H1 (cell line): ENCODE measurements at regions of chr2 and their contacts with region 1.

Region 1: DNA sequence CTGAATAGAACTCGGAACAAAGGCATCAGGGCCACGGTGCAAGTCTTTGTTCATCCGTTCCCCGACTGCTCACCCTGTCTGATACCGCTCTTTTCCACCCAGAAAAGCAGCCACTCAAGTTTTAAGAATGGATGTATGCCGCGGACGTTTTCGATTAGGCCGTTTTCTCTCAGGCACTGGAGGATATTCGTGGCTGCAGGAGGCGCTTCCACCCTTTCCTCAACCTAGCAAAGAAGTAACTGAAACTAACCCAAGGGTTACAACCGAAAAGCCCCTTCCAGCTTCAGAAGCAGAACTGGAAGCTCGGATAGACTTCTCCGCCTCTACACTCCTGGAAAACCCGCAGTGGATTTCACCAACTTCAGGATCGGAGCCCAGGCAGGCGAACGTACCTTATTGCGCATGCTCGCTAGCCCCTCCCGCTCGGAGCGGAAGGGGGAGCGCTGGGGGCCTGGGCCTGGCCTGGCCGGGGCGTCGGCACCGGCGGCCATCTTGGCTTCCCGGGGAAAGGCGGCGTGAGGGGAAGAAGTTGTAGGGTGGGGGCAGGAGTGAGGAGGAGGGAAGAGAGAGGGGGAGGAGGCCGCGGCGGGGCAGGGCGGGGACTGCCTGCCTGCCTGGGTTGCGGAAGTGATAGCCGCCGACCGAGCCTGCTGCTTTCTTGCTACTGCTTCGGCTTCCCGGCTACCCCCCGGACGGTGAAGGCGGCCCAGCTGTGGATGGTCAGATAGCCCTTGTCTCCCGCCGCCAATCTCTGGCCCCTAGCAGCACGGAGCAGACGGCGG is at the start of gene ACTR3:
- DNase-seq: peak; percentile 96 to 99
- H3K4me3 ChIP-seq: peak within 1 kb of the TSS; percentile 80 to 95 (median 87)
- H3K27ac ChIP-seq: peak within 1 kb of the TSS; percentile 93
- H3K4me1 ChIP-seq: peaks cover 0 to 11% (median 6%) of the 10 kb centered on the region in 4 experiments; a peak in 4 of 7 replicates
- H3K27me3 ChIP-seq: no peaks in the 10 kb centered on the region
- CTCF ChIP-seq: no peak
- EP300 ChIP-seq: no peak
- POLR2A ChIP-seq: peak; percentile 92 to 94
- RAD21 ChIP-seq: no peak; a peak in 1 of 4 replicates
- total RNA-seq, gene ACTR3: 184 and 189 TPM in 2 replicates

Region 2: DNA sequence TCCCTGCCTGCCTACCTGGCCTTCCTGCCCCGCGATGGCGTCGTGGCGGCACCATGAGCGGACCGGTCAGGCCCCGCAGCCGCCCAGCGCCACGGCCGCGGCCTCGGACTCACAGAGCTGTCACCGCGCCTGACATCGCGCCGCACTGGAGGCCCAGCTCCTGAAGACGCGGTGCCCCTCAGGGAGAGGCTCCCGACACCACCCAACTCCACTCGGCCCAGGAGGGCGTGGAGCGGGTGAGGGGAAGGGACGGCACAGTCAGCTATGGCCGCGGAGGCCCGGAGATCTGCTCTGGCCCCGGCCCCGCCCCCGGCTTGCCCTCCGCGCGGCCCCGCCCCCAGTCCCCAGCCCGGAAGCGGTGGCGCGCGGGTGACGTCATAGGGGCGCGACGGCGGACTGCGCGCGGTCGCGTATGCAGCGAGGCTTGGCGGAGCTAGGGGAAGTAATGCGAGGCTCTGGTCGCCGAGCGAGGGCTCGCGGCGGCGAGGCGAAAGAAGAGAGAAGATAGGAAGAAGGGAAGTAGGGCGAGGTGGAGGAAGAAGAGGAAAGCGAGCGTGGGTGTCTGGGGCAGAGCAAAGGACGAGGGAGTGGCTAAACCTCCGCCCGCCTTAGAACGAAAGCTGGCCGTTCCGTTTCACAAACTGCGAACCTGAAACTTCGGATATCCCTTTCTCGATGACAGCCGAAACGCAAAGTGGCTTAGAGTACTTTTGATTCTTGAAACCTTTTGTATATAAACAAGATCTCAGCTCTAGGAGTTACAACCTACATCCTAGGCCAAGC is 133.1 kb before region 1 on chr2 and contains the start of gene SLC35F5:
- CTCF ChIA-PET with region 1: no interaction called
- POLR2A ChIA-PET with region 1: interaction called, 24 read pairs
- DNase-seq: peak; percentile 47 to 97
- H3K4me3 ChIP-seq: peak within 1 kb of the TSS; percentile 75 to 94 (median 90)
- H3K27ac ChIP-seq: peak within 1 kb of the TSS; percentile 85
- H3K4me1 ChIP-seq: no peaks in the 10 kb centered on the region; a peak in 2 of 7 replicates
- H3K27me3 ChIP-seq: no peaks in the 10 kb centered on the region
- CTCF ChIP-seq: no peak
- EP300 ChIP-seq: no peak
- POLR2A ChIP-seq: peak; percentile 76 to 92
- RAD21 ChIP-seq: no peak
- total RNA-seq, gene SLC35F5: 22.2 and 24.1 TPM in 2 replicates

Region 3: DNA sequence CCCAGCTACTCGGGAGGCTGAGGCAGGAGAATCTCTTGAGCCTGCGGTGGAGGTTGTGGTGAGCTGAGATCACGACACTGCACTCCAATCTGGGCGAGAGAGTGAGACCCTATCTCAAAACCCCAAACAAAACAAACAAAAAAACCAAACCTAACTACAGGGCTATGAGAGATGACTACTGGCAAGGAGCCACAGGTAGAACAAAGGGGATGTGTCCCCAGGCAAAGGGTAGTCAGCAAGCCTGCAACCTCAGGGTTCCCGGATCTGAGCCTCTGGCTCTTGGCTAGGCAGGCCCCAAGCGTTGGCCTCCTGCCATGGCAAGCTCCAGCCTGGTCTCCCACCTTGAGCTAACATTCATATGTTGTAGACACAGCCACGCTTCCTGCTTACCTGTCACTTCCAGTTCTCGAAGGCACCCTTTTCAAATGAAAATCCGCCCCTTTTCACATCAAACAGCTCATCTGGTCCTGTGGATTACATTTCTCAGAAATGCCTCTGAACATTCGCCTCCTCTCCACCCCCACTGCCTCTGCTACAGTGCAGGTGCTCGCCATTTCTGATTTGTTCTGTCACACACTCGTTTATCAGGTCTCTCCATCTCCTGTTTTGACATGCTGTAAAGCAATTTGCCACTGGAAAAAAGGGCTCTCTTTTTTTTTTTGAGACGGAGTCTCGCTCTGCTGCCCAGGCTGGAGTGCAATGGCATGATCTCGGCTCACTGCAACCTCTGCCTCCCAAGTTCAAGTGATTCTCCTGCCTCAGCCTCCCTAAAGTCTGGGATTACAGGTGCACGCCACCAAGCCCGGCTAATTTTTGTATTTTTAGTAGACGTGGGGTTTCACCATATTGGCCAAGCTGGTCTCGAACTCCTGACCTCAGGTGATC is 12.9 kb before region 1 on chr2:
- CTCF ChIA-PET with region 1: interaction called, 4 read pairs
- POLR2A ChIA-PET with region 1: interaction called, 50 read pairs
- DNase-seq: no peak
- H3K4me3 ChIP-seq: no peak overlapping the region
- H3K27ac ChIP-seq: no peak overlapping the region
- H3K4me1 ChIP-seq: peaks cover 0 to 3% (median 0%) of the 10 kb centered on the region in 4 experiments; a peak in 1 of 7 replicates
- H3K27me3 ChIP-seq: no peaks in the 10 kb centered on the region
- CTCF ChIP-seq: no peak
- EP300 ChIP-seq: no peak
- POLR2A ChIP-seq: no peak
- RAD21 ChIP-seq: peak in 1 of 2 experiments; percentile 7; a peak in 1 of 4 replicates